ENCODE measurements at regions of chr10 and their contacts with region 1.

Region 1: GRCh38 chr10:13160934-13161856 is at the start of gene MCM10:
- DNase-seq: peak; percentile 98
- H3K4me3 Mint-ChIP-seq: peak within 1 kb of the TSS; percentile 87
- H3K27ac Mint-ChIP-seq: peak within 1 kb of the TSS; percentile 68
- H3K4me1 Mint-ChIP-seq: peaks cover 19% of the 10 kb centered on the region
- H3K27me3 Mint-ChIP-seq: no peaks in the 10 kb centered on the region
- CTCF ChIP-seq: peak; percentile 68
- total RNA-seq, gene MCM10: 42.0 and 49.3 TPM in 2 replicates

Region 2: DNA sequence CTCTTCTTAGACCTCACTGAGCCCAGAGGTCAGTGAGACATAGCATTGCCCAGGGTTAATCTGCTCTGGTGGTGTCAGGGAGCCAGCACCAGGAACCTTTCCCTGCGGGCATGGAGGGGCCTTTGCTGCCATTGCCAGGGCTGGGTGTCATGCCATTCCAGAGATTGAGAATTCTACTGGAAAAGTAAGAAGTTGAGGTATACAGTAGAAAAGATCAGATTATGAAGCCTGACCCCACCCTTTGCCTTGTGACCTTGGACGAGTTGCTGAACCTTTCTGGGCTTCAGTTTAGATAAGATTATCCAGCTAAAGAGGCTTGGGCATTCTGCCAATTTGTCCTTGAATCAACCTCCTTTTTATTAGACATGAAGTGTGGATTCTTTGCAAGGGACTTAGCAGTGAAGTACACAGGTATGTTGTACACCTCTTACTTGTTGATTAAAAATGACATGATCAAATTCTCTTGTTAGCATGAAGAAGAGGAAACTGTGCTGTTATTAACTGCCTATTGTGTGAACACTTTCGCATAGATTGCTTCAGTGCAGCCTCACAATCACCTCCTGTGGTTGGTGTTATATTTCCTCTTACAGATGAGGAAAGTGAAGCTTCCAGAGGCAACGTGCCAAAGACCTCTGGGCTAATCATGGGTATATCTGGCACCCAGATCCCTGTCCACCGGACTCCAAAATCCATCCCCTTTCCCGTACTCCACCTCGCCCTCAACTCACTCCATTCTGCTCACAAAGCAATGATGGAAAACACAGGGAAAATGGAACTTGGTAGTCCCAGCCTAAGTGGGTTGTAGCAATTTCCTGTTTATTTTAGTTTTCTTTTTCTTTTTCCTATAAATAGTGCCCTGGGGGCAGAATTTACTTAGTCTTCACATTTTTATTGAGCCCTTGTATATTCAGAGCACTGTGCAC is 660.6 kb before region 1 on chr10:
- CTCF ChIA-PET with region 1: no interaction called
- intact Hi-C with region 1: no loop called
- DNase-seq: peak; percentile 18
- H3K4me3 Mint-ChIP-seq: no peak overlapping the region
- H3K27ac Mint-ChIP-seq: peak overlapping the region; percentile 54
- H3K4me1 Mint-ChIP-seq: peaks cover 28% of the 10 kb centered on the region
- H3K27me3 Mint-ChIP-seq: peaks cover 99% of the 10 kb centered on the region
- CTCF ChIP-seq: no peak

Region 3: DNA sequence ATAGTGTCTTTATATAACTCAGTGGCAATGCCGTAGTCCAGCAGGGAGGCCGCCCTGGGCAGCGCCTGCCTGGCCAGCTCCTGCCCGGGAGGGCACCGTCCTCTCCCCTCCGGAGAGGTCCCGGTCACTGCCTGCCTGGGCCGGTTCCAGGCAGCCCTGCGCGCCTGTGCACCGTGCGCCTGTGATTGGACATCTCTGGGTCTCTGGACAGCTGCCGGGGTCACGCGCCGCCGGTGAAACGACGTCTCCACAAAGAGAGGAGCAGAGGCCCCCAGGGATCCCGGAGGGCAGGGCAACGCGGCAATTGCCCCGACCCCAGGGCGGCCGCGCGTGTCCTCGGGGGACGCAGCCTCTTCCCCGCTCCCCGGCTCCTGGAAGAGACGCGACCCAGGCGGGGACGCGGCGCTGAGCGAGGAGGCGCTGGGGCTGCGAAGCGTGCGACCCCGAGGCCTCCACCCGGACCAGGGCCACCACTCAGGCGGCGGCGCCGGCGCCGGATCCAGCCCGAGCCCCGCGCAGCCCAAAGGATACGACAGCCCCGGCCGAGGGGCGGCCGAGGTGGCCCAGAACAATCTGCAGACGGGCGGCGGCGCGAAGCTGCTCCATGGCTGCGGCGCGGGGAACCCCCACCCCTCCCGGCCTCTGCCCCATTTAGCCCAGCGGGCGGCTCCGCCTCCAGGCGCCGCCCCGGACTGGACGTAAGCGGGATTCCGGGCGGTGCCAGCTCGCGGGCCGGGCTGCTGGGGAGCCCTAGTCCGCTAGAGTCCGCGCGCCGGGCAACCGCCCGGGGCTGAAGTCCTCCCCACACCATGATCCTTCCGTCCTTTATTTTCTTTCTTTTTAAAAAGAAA is 138.5 kb after region 1 on chr10 and contains the start of gene PHYH:
- CTCF ChIA-PET with region 1: interaction called, 3 read pairs
- intact Hi-C with region 1: loop called (anchors 1 kb)
- DNase-seq: peak; percentile 88
- H3K4me3 Mint-ChIP-seq: peak within 1 kb of the TSS; percentile 70
- H3K27ac Mint-ChIP-seq: peak within 1 kb of the TSS; percentile 77
- H3K4me1 Mint-ChIP-seq: peaks cover 16% of the 10 kb centered on the region
- H3K27me3 Mint-ChIP-seq: no peaks in the 10 kb centered on the region
- CTCF ChIP-seq: no peak
- total RNA-seq, gene PHYH: 26.7 and 30.4 TPM in 2 replicates

Region 4: GRCh38 chr10:13536674-13537366 is 375.6 kb after region 1 on chr10:
- CTCF ChIA-PET with region 1: no interaction called
- intact Hi-C with region 1: loop called (anchors 5 kb)
- DNase-seq: peak; percentile 74
- H3K4me3 Mint-ChIP-seq: no peak overlapping the region
- H3K27ac Mint-ChIP-seq: no peak overlapping the region
- H3K4me1 Mint-ChIP-seq: no peaks in the 10 kb centered on the region
- H3K27me3 Mint-ChIP-seq: peaks cover 62% of the 10 kb centered on the region
- CTCF ChIP-seq: peak; percentile 66

Measured in Calu3 (cell line).